HepG2 (cell line): ENCODE measurements at regions of chr17 and their contacts with region 1.

Region 1: DNA sequence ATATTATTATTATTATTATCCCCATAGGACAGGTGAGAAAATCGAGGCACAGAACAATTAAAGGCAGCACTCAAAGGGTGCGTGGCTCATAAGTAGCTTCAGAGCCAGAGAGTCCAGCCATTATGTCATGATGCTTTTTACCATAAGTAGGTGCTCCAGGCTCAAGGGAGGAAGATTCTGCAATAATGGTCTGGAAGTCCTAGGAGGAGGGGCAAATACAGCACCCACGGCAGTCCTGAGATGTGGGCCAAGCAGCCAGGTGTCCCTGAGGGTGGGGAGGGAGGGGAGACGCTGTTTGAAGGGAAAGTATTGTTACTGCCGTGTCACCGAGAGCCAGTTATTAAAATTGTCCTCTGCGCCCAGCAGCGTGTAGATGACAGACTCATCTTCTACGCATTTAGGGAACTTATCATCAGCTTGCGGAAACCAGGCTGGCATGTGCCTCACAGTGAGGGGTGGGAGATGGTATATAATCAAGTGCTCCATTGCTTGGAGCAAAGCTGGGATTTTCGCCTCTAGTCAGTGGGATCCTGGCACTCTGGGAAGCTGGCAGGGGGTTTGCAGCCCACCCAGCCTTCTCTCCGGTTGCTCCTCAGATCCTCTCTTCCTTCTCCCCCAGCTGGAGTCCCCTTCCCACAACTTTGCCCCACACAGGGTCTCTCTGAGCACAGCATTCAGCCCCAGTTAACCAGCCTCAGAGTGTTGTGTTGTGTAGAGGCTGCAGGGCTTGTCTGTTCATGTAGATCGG is 104.7 kb downstream of the OR1D5 start:
- DNase-seq: no peak
- ATAC-seq: no peak
- H3K4me3 ChIP-seq: no peak overlapping the region
- H3K27ac ChIP-seq: no peak overlapping the region
- H3K4me1 ChIP-seq: peaks cover 51% of the 10 kb centered on the region
- H3K27me3 ChIP-seq: no peaks in the 10 kb centered on the region
- CTCF ChIP-seq: no peak
- EP300 ChIP-seq: no peak
- POLR2A ChIP-seq: no peak
- RAD21 ChIP-seq: no peak

Region 2: GRCh38 chr17:2975469-2975958 is 16.8 kb after region 1 on chr17:
- CTCF ChIA-PET with region 1: no interaction called
- POLR2A ChIA-PET with region 1: interaction called, 30 read pairs
- in situ Hi-C with region 1: no loop called
- intact Hi-C with region 1: no loop called
- DNase-seq: peak; percentile 87
- ATAC-seq: peak; percentile 98
- H3K4me3 ChIP-seq: peak overlapping the region; percentile 63 to 77 (median 76)
- H3K27ac ChIP-seq: peak overlapping the region; percentile 66
- H3K4me1 ChIP-seq: peaks cover 21% of the 10 kb centered on the region
- H3K27me3 ChIP-seq: no peaks in the 10 kb centered on the region; a peak in 1 of 5 replicates
- CTCF ChIP-seq: peak; percentile 26
- EP300 ChIP-seq: no peak
- POLR2A ChIP-seq: peak; percentile 89 to 95
- RAD21 ChIP-seq: peak; percentile 33; the same call in 1 of the 2 replicates

Region 3: GRCh38 chr17:2990396-2990795 is 31.6 kb after region 1 on chr17:
- CTCF ChIA-PET with region 1: no interaction called
- POLR2A ChIA-PET with region 1: no interaction called
- in situ Hi-C with region 1: no loop called
- intact Hi-C with region 1: no loop called
- DNase-seq: no peak
- ATAC-seq: no peak
- H3K4me3 ChIP-seq: no peak overlapping the region
- H3K27ac ChIP-seq: no peak overlapping the region
- H3K4me1 ChIP-seq: no peaks in the 10 kb centered on the region
- H3K27me3 ChIP-seq: no peaks in the 10 kb centered on the region
- CTCF ChIP-seq: no peak
- EP300 ChIP-seq: no peak
- POLR2A ChIP-seq: no peak
- RAD21 ChIP-seq: no peak